B cell (primary cell): ENCODE measurements at regions of chr16 and their contacts with region 1.

Region 1: DNA sequence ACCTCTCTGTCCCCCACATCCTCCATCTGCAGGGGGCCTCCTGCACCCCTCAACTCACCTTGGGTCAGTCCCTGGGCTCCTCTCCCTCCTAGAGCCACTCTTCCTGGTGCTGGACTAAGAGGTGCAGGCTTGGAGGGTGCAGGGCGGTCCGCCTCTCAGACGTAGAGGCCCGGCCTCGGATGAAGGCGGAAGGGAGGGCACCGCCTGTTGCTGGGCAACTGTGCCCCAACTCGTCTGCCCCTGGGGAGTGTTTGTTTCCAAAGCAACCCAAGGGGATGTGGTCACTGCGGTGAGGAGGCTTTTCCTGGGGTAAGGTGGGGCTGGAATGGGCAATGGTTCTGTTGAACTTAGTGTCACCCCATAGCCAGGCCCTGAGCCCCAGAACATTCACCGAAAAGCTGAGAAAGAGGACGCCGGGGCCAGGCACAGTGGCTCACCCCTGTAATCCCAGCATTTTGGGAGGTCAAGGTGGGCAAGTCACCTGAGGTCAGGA is at the start of gene C16orf54:
- DNase-seq: peak; percentile 93
- ATAC-seq: peak; percentile 90
- H3K4me3 ChIP-seq: peak within 1 kb of the TSS; percentile 91 to 100 (median 97)
- H3K4me3 Mint-ChIP-seq: peak within 1 kb of the TSS; percentile 99
- H3K27ac ChIP-seq: peak within 1 kb of the TSS; percentile 95
- H3K27ac Mint-ChIP-seq: peak within 1 kb of the TSS; percentile 99
- H3K4me1 ChIP-seq: peaks cover 44 to 59% of the 10 kb centered on the region in 2 donors
- H3K4me1 Mint-ChIP-seq: peaks cover 64% of the 10 kb centered on the region
- H3K27me3 ChIP-seq: no peaks in the 10 kb centered on the region
- H3K27me3 Mint-ChIP-seq: no peaks in the 10 kb centered on the region
- CTCF ChIP-seq: no peak
- total RNA-seq, gene C16orf54: 64.4 and 68.3 TPM in 2 replicates

Region 2: DNA sequence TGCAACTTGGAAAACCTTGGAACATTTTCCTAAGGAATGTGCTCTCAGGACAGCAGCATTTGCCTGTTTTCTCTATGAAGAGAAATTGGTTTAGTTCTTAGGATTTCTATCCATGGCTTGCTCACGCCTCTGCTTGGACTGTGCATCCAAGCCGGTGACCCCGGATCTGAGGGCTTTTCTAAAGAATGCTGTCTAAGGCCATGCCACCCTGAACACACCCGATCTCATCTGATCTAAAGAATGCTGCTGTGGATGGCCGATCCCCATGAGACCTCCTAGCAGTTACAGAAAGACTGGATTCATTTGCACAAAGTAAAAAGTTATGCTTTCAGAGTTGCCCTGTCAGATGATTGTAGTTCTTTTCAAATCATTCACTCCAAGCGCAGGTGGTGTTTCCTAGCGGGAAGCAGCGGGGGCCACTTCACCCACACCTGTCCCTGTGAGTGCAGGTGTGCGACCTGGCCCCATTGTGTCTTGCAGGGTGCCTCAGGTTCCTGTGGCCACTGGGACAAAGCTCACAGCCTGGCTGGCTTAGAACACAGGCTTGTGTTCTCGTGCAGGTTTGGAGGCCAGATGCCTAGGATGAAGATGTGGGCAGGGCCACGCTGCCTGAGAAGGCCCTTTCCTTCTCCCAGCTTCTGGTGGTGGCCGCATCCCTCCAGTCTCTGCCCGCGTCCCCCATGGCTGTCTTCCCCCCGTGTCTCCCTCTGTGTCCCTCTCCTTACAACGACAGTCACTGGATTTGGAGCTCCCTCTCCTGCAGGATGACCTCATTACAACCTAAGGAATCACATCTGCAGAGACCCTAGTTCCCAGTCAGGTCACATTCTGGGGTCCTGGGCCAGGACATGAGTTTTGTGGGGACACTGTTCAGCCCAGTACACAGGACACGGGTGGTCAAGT is 430.0 kb before region 1 on chr16:
- CTCF ChIA-PET with region 1: no interaction called
- POLR2A ChIA-PET with region 1: no interaction called
- intact Hi-C with region 1: no loop called
- DNase-seq: no peak
- ATAC-seq: no peak
- H3K4me3 ChIP-seq: no peak overlapping the region
- H3K4me3 Mint-ChIP-seq: no peak overlapping the region
- H3K27ac ChIP-seq: no peak overlapping the region
- H3K27ac Mint-ChIP-seq: no peak overlapping the region
- H3K4me1 ChIP-seq: peaks cover 0 to 20% of the 10 kb centered on the region in 2 donors
- H3K4me1 Mint-ChIP-seq: peaks cover 26% of the 10 kb centered on the region
- H3K27me3 ChIP-seq: no peaks in the 10 kb centered on the region
- H3K27me3 Mint-ChIP-seq: no peaks in the 10 kb centered on the region
- CTCF ChIP-seq: no peak

Region 3: GRCh38 chr16:29678691-29679267 is 67.1 kb before region 1 on chr16 and contains the start of gene QPRT:
- CTCF ChIA-PET with region 1: no interaction called
- POLR2A ChIA-PET with region 1: interaction called, 15 read pairs
- intact Hi-C with region 1: no loop called
- DNase-seq: peak; percentile 10
- ATAC-seq: no peak
- H3K4me3 ChIP-seq: peak within 1 kb of the TSS in 2 of 5 experiments; percentile 8 to 19
- H3K4me3 Mint-ChIP-seq: peak within 1 kb of the TSS; percentile 79
- H3K27ac ChIP-seq: no peak within 1 kb of the TSS
- H3K27ac Mint-ChIP-seq: peak within 1 kb of the TSS; percentile 21
- H3K4me1 ChIP-seq: peaks cover 14 to 25% of the 10 kb centered on the region in 2 donors
- H3K4me1 Mint-ChIP-seq: peaks cover 19% of the 10 kb centered on the region
- H3K27me3 ChIP-seq: no peaks in the 10 kb centered on the region
- H3K27me3 Mint-ChIP-seq: no peaks in the 10 kb centered on the region
- CTCF ChIP-seq: no peak
- total RNA-seq, gene QPRT: 0.22 and 0.24 TPM in 2 replicates

Region 4: GRCh38 chr16:29729116-29729521 is 16.8 kb before region 1 on chr16:
- CTCF ChIA-PET with region 1: interaction called, 3 read pairs
- POLR2A ChIA-PET with region 1: interaction called, 10 read pairs
- intact Hi-C with region 1: no loop called
- DNase-seq: peak; percentile 35
- ATAC-seq: peak; percentile 24
- H3K4me3 ChIP-seq: no peak overlapping the region
- H3K4me3 Mint-ChIP-seq: no peak overlapping the region
- H3K27ac ChIP-seq: no peak overlapping the region
- H3K27ac Mint-ChIP-seq: no peak overlapping the region
- H3K4me1 ChIP-seq: peaks cover 8 to 32% of the 10 kb centered on the region in 2 donors
- H3K4me1 Mint-ChIP-seq: peaks cover 24% of the 10 kb centered on the region
- H3K27me3 ChIP-seq: no peaks in the 10 kb centered on the region
- H3K27me3 Mint-ChIP-seq: no peaks in the 10 kb centered on the region
- CTCF ChIP-seq: no peak

Region 5: DNA sequence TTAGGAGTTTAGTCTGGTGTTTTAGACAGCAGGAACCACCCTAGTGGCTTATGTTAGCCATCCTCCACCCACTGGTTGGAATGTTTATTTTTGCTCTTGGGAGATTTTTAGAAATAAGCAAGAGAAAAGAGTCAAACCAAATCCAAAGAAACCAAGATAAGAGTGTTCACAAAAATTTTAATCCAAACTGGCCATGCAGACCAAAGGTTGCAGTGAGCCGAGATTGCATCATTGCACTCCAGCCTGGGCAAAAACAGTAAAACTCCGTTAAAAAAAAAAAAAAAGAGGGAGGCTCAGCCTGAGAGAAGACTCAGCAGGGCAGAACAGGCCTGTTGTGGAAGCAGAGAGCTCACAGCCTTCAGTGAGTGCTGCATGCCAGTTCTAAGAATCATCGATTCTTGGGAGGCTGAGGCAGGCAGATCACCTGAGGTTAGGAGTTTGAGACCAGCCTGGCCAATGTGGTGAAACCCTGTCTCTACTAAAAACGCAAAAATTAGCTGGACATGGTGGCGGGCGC is 12.1 kb after region 1 on chr16:
- CTCF ChIA-PET with region 1: interaction called, 5 read pairs
- POLR2A ChIA-PET with region 1: interaction called, 5 read pairs
- intact Hi-C with region 1: loop called (anchors 1 kb)
- DNase-seq: no peak
- ATAC-seq: no peak
- H3K4me3 ChIP-seq: no peak overlapping the region
- H3K4me3 Mint-ChIP-seq: no peak overlapping the region
- H3K27ac ChIP-seq: no peak overlapping the region
- H3K27ac Mint-ChIP-seq: peak overlapping the region; percentile 41
- H3K4me1 ChIP-seq: peaks cover 10 to 30% of the 10 kb centered on the region in 2 donors
- H3K4me1 Mint-ChIP-seq: peaks cover 15% of the 10 kb centered on the region
- H3K27me3 ChIP-seq: no peaks in the 10 kb centered on the region
- H3K27me3 Mint-ChIP-seq: no peaks in the 10 kb centered on the region
- CTCF ChIP-seq: no peak

Region 6: GRCh38 chr16:30075507-30076275 is 329.8 kb after region 1 on chr16 and contains the start of gene PPP4C:
- CTCF ChIA-PET with region 1: no interaction called
- POLR2A ChIA-PET with region 1: no interaction called
- intact Hi-C with region 1: no loop called
- DNase-seq: peak; percentile 93
- ATAC-seq: peak; percentile 89
- H3K4me3 ChIP-seq: peak within 1 kb of the TSS; percentile 65 to 98 (median 90)
- H3K4me3 Mint-ChIP-seq: peak within 1 kb of the TSS; percentile 98
- H3K27ac ChIP-seq: peak within 1 kb of the TSS; percentile 67 to 90
- H3K27ac Mint-ChIP-seq: peak within 1 kb of the TSS; percentile 98
- H3K4me1 ChIP-seq: peaks cover 14 to 25% of the 10 kb centered on the region in 2 donors
- H3K4me1 Mint-ChIP-seq: peaks cover 31% of the 10 kb centered on the region
- H3K27me3 ChIP-seq: no peaks in the 10 kb centered on the region
- H3K27me3 Mint-ChIP-seq: no peaks in the 10 kb centered on the region
- CTCF ChIP-seq: no peak
- total RNA-seq, gene PPP4C: 89.0 and 93.3 TPM in 2 replicates